Right lobe of liver (tissue), 6 donors: ENCODE measurements at regions of chr3 and their contacts with region 1.

Region 1: GRCh38 chr3:184874709-184875644 is 63.0 kb downstream of the VPS8 start:
- DNase-seq: no peak
- ATAC-seq: peak; percentile 63 to 76 (median 68)
- H3K4me3 ChIP-seq: no peak overlapping the region
- H3K27ac ChIP-seq: no peak overlapping the region
- H3K4me1 ChIP-seq: no peaks in the 10 kb centered on the region
- H3K27me3 ChIP-seq: no peaks in the 10 kb centered on the region
- CTCF ChIP-seq: peak; percentile 55 to 65 (median 62)
- POLR2A ChIP-seq: no peak

Region 2: GRCh38 chr3:185176750-185177359 is 301.9 kb after region 1 on chr3:
- intact Hi-C with region 1: loop called (anchors 5 to 10 kb)
- DNase-seq: no peak
- ATAC-seq: peak; percentile 59 to 68 (median 65)
- H3K4me3 ChIP-seq: no peak overlapping the region
- H3K27ac ChIP-seq: no peak overlapping the region
- H3K4me1 ChIP-seq: no peaks in the 10 kb centered on the region
- H3K27me3 ChIP-seq: no peaks in the 10 kb centered on the region
- CTCF ChIP-seq: peak; percentile 56 to 72 (median 65)
- POLR2A ChIP-seq: no peak

Region 3: DNA sequence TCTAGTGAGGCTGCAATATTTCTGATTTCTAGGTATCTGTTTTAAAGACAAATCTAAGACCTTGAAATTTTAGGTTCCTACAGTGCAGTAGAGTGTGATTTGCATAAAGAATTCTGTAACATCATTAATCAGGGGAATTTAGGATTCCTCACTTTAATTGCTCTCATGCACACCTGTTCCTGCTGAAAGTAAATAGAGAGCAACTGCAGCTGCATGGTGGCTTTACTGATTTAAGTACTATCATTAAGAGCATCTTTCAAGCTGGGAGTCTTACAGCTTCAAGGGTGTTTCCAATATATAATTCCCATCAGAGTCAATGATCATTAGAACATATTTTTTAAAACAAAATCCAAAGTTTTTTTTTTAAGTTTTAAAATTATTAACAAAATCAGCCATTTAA is 313.8 kb after region 1 on chr3:
- intact Hi-C with region 1: loop called in 1 of 2 experiments (anchors 10 kb)
- DNase-seq: no peak
- ATAC-seq: peak in 1 of 4 donors; percentile 6
- H3K4me3 ChIP-seq: no peak overlapping the region
- H3K27ac ChIP-seq: no peak overlapping the region
- H3K4me1 ChIP-seq: no peaks in the 10 kb centered on the region
- H3K27me3 ChIP-seq: no peaks in the 10 kb centered on the region
- CTCF ChIP-seq: no peak
- POLR2A ChIP-seq: no peak